ENCODE measurements at regions of chr11 and their contacts with region 1.

Region 1: GRCh38 chr11:46700241-46701077 is at the starts of genes ARHGAP1 and ZNF408:
- DNase-seq: peak; percentile 97
- ATAC-seq: peak; percentile 94
- H3K4me3 ChIP-seq: peak within 1 kb of the TSS; percentile 83 to 99 (median 98)
- H3K27ac ChIP-seq: peak within 1 kb of the TSS; percentile 97
- H3K4me1 ChIP-seq: peaks cover 60% of the 10 kb centered on the region
- H3K27me3 ChIP-seq: no peaks in the 10 kb centered on the region; a peak in 1 of 5 replicates
- CTCF ChIP-seq: no peak
- EP300 ChIP-seq: peak in 1 of 2 experiments; percentile 37; a peak in 2 of 4 replicates
- POLR2A ChIP-seq: peak; percentile 82 to 98
- RAD21 ChIP-seq: peak; percentile 33; the same call in 1 of the 2 replicates
- total RNA-seq, gene ARHGAP1: 18.6 and 22.4 TPM in 2 replicates
- total RNA-seq, gene ZNF408: 8.3 and 12.5 TPM in 2 replicates

Region 2: DNA sequence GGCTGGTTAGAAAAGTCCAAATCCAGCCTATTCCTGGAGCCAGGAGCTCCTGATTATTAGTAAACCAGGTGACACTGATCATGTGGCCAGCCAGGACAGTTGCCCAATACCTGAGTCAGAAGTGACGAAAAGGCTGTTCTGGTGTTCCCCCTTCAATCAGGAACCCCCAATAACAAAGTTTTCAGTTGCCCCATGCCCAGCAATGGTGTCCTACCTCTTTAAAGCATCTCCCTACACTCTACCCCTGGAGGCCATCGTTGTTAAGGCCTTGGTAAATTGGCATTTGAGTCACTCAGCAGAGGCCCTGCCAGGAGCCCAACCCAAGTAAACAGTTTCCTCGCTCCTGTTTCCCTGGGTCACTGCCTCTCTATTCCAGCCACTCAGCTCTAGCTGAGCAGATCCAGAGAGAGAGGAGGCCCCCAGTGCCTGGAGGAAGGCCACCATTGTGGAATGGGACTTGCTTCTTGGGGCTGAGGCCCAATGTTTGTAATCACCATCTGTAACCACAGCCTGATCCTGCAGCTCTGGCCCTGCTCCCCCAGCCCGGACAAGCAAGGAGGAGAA is 25.1 kb before region 1 on chr11:
- CTCF ChIA-PET with region 1: no interaction called
- POLR2A ChIA-PET with region 1: interaction called, 15 read pairs
- in situ Hi-C with region 1: no loop called
- intact Hi-C with region 1: no loop called
- DNase-seq: peak; percentile 55
- ATAC-seq: peak; percentile 71
- H3K4me3 ChIP-seq: peak overlapping the region in 1 of 3 experiments; percentile 19; a peak in 2 of 6 replicates
- H3K27ac ChIP-seq: peak overlapping the region; percentile 67
- H3K4me1 ChIP-seq: peaks cover 27% of the 10 kb centered on the region
- H3K27me3 ChIP-seq: no peaks in the 10 kb centered on the region
- CTCF ChIP-seq: no peak
- EP300 ChIP-seq: no peak
- POLR2A ChIP-seq: no peak
- RAD21 ChIP-seq: no peak

Region 3: GRCh38 chr11:46710821-46711269 is 10.4 kb after region 1 on chr11:
- CTCF ChIA-PET with region 1: no interaction called
- POLR2A ChIA-PET with region 1: interaction called, 272 read pairs
- in situ Hi-C with region 1: no loop called
- intact Hi-C with region 1: no loop called
- DNase-seq: no peak
- ATAC-seq: peak; percentile 29; the same call in 2 of the 3 replicates
- H3K4me3 ChIP-seq: no peak overlapping the region
- H3K27ac ChIP-seq: no peak overlapping the region
- H3K4me1 ChIP-seq: peaks cover 46% of the 10 kb centered on the region
- H3K27me3 ChIP-seq: no peaks in the 10 kb centered on the region
- CTCF ChIP-seq: no peak
- EP300 ChIP-seq: no peak
- POLR2A ChIP-seq: no peak
- RAD21 ChIP-seq: no peak

Region 4: DNA sequence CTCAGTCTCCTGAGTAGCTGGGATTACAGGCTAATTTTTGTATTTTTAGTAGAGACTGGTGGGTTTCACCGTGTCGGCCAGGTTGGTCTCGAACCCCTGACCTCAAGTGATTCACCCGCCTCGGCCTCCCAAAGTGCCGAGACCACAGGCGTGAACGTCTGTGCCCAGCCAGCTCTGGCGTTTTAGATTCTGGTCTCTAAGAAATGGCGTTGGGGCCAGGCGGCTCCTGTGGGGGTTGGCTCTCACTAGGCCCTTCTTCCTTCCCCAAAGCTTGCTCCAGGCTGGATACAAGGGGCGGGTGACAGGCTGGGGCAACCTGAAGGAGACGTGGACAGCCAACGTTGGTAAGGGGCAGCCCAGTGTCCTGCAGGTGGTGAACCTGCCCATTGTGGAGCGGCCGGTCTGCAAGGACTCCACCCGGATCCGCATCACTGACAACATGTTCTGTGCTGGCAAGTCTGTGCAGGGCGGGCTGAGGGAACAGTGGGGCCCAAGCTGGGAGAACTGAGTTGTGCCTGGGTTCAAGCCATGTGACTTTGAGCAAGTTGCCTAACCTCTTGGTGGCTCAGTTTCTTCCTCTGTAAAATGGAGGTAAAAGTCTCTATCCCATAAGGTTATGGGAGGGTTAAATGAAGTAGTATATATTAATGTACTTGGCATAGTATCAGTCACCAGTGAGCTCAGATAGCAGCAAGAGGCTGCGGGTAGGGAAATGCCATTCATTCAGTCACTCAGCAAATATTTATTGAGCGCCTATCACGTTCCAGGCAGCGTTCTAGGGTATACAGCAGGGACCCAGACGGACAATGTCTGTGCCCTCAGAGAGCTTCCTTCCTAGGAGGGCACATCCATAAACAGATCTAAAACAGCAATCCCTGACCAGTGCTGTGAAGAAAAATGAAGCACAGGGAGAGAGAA is 28.9 kb after region 1 on chr11:
- CTCF ChIA-PET with region 1: no interaction called
- POLR2A ChIA-PET with region 1: interaction called, 272 read pairs
- in situ Hi-C with region 1: no loop called
- intact Hi-C with region 1: no loop called
- DNase-seq: no peak
- ATAC-seq: peak; percentile 3; the same call in 1 of the 3 replicates
- H3K4me3 ChIP-seq: no peak overlapping the region
- H3K27ac ChIP-seq: no peak overlapping the region
- H3K4me1 ChIP-seq: peaks cover 56% of the 10 kb centered on the region
- H3K27me3 ChIP-seq: no peaks in the 10 kb centered on the region
- CTCF ChIP-seq: no peak
- EP300 ChIP-seq: no peak
- POLR2A ChIP-seq: peak in 1 of 2 experiments; percentile 36; a peak in 1 of 4 replicates
- RAD21 ChIP-seq: no peak

Region 5: DNA sequence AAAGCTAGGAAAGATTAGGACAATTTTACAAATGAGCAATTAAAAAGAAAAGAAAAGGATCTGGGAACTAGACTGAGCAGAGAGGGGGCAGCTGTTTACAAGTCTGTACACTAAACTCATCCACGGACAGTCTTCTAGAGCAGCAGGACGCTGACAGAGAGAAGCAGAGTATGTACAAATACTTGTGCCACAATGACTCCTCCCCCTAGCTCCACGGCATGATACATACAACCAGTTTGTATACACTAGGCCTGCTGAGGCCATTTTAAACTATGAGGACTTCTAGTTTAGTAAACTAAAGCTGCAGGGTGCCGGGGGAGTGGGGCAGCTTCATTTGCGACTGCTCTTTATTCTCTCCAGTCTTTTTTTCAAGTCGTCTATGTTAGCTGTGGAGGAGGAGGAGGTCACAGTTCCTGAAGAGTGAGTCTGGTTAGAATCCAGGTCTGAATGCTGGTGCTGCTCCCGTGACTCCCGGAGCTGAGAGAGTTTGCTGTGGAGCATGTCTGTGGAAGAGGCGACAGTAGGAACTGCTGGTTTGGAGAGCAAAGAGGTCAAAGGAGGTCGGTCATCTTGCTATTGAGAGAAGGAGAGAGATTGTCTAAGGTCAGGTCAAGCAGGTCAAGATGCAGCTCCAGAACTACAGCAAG is 43.4 kb after region 1 on chr11:
- CTCF ChIA-PET with region 1: no interaction called
- POLR2A ChIA-PET with region 1: interaction called, 17 read pairs
- in situ Hi-C with region 1: no loop called
- intact Hi-C with region 1: no loop called
- DNase-seq: no peak
- ATAC-seq: peak; percentile 17
- H3K4me3 ChIP-seq: no peak overlapping the region
- H3K27ac ChIP-seq: peak overlapping the region; percentile 27
- H3K4me1 ChIP-seq: no peaks in the 10 kb centered on the region
- H3K27me3 ChIP-seq: no peaks in the 10 kb centered on the region
- CTCF ChIP-seq: no peak
- EP300 ChIP-seq: no peak
- POLR2A ChIP-seq: peak in 1 of 2 experiments; percentile 38; a peak in 2 of 4 replicates
- RAD21 ChIP-seq: no peak